ENCODE measurements at regions of chr3 and their contacts with region 1.

Region 1: GRCh38 chr3:130850044-130850797 is 43.7 kb upstream of the ATP2C1 start:
- DNase-seq: peak; percentile 54 to 76
- H3K4me3 ChIP-seq: peak overlapping the region; percentile 36; the same call in 1 of the 2 replicates
- H3K27ac ChIP-seq: peak overlapping the region; percentile 73
- H3K4me1 ChIP-seq: peaks cover 31% of the 10 kb centered on the region
- H3K27me3 ChIP-seq: no peaks in the 10 kb centered on the region
- CTCF ChIP-seq: no peak

Region 2: DNA sequence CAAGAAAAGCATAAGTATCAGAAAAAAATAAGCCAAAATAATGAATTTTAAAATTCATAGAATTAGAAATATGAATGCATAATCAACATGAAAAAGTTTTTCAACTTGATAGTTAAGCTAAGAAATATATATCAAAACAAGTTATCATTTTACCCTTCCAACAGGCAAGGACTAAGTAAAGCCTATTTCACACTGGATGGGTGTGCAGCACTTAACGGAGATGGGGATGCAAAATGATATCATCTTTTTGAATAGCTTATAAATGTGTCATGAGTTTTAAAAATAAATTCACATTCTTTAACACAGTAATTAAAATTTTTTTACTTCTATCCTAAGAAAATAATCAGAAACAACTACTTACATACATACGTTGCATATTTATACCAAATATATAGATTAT is 124.5 kb before region 1 on chr3:
- CTCF ChIA-PET with region 1: no interaction called
- POLR2A ChIA-PET with region 1: interaction called, 19 read pairs
- intact Hi-C with region 1: no loop called
- DNase-seq: no peak
- H3K4me3 ChIP-seq: no peak overlapping the region
- H3K27ac ChIP-seq: no peak overlapping the region
- H3K4me1 ChIP-seq: no peaks in the 10 kb centered on the region
- H3K27me3 ChIP-seq: no peaks in the 10 kb centered on the region
- CTCF ChIP-seq: no peak

Region 3: GRCh38 chr3:130759699-130760338 is 90.4 kb before region 1 on chr3:
- CTCF ChIA-PET with region 1: no interaction called
- POLR2A ChIA-PET with region 1: no interaction called
- intact Hi-C with region 1: loop called (anchors 1 kb)
- DNase-seq: peak; percentile 52 to 61
- H3K4me3 ChIP-seq: no peak overlapping the region
- H3K27ac ChIP-seq: no peak overlapping the region
- H3K4me1 ChIP-seq: peaks cover 31% of the 10 kb centered on the region
- H3K27me3 ChIP-seq: no peaks in the 10 kb centered on the region
- CTCF ChIP-seq: peak; percentile 83

Region 4: GRCh38 chr3:130789782-130790322 is 60.4 kb before region 1 on chr3:
- CTCF ChIA-PET with region 1: no interaction called
- POLR2A ChIA-PET with region 1: no interaction called
- intact Hi-C with region 1: loop called (anchors 5 kb)
- DNase-seq: no peak
- H3K4me3 ChIP-seq: no peak overlapping the region
- H3K27ac ChIP-seq: no peak overlapping the region
- H3K4me1 ChIP-seq: no peaks in the 10 kb centered on the region
- H3K27me3 ChIP-seq: no peaks in the 10 kb centered on the region
- CTCF ChIP-seq: no peak

Region 5: GRCh38 chr3:130820976-130821375 is 29.2 kb before region 1 on chr3:
- CTCF ChIA-PET with region 1: no interaction called
- POLR2A ChIA-PET with region 1: no interaction called
- intact Hi-C with region 1: loop called (anchors 2 kb)
- DNase-seq: peak; percentile 46 to 87
- H3K4me3 ChIP-seq: no peak overlapping the region
- H3K27ac ChIP-seq: peak overlapping the region; percentile 45
- H3K4me1 ChIP-seq: peaks cover 10% of the 10 kb centered on the region
- H3K27me3 ChIP-seq: no peaks in the 10 kb centered on the region
- CTCF ChIP-seq: no peak

Region 6: GRCh38 chr3:130892759-130893375 is 42.6 kb after region 1 on chr3:
- CTCF ChIA-PET with region 1: no interaction called
- POLR2A ChIA-PET with region 1: interaction called, 15 read pairs
- intact Hi-C with region 1: loop called (anchors 2 kb)
- DNase-seq: peak; percentile 57 to 64
- H3K4me3 ChIP-seq: peak overlapping the region; percentile 75
- H3K27ac ChIP-seq: peak overlapping the region; percentile 78
- H3K4me1 ChIP-seq: peaks cover 21% of the 10 kb centered on the region
- H3K27me3 ChIP-seq: no peaks in the 10 kb centered on the region
- CTCF ChIP-seq: peak; percentile 91

Region 7: DNA sequence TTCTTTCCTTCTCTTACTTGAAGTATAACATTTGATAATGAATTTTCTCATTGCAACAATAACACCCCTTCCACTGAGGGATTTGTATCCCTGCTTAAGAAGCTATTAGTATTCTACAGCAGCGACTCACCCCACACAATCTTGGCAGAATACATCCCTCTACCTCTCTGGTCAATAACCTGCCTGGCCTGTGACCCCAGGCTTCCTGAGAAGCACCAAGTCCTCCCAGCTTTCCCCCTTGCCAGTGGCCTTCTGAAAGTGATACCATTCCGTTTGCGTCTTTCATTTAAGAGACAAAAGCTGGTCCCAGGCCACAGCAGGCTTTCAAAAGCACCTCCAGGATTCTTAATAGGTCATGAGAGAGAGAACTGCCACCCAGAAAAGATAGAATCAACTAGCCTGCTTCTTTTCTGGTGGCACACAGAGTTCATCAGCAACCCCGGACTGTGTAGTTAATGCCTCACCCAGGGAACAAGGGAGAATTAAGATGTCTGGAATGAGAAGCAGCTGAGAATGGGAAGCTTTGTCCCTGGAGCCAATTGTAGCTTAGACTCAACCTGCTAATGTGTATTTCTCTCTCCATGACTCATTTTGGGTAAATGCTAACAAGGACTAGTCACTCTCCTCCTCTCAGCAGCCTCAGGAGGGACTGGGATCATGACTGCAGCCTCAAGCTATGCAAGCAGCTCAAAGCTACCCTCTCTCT is 1285.6 kb after region 1 on chr3:
- CTCF ChIA-PET with region 1: no interaction called
- POLR2A ChIA-PET with region 1: no interaction called
- intact Hi-C with region 1: loop called (anchors 1 kb)
- DNase-seq: peak; percentile 71 to 97
- H3K4me3 ChIP-seq: peak overlapping the region; percentile 52
- H3K27ac ChIP-seq: peak overlapping the region; percentile 100
- H3K4me1 ChIP-seq: peaks cover 50% of the 10 kb centered on the region
- H3K27me3 ChIP-seq: no peaks in the 10 kb centered on the region
- CTCF ChIP-seq: no peak